CD4-positive, alpha-beta memory T cell (primary cell): ENCODE measurements at regions of chr13 and their contacts with region 1.

Region 1: DNA sequence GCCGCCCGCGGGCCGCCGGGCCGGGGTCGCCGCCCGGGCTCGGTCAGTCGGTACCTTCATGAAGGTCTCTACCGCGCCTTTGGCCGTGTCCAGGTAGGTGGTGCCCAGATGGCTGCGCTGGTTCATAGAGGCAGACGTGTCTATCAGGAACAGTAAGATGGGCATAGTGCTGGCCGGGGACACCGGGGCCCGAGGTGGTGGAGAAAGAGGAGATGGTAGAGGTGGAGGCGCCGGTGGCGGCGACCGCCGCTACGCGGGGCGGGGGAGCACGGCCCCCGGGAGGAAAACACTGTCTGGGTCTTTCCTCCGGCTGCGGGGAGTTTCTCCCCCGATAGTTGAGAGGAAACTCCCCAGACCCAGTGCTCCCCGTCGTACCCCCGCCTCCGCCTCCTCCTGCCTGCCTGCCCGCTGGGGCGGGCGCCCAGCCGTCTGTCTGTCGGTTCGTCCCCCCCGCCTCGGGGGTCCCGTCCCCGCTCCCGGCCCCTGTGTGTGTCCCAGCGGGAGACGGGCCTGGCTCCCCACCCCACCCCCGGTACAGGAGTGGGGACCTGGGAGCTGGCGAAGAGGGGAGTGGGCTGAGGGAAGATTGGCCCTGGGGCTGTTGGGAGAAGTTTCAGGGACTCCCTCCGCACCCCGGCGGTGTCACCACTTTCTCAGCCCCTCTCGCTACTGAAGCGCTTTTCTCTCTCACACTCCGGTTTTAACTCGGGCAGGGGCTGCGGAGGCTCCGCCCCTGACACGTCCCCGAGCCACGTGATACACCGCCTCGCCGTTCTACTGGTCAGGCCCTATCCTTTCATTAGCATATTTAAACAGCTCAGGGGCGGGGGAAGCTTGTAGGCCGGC is at the start of gene INTS6:
- DNase-seq: peak; percentile 98 to 100 (median 100)
- H3K4me3 ChIP-seq: peak within 1 kb of the TSS; percentile 62 to 82
- H3K4me3 Mint-ChIP-seq: peak within 1 kb of the TSS; percentile 89 to 96 (median 94)
- H3K27ac ChIP-seq: peak within 1 kb of the TSS; percentile 97
- H3K27ac Mint-ChIP-seq: peak within 1 kb of the TSS; percentile 94 to 99 (median 98)
- H3K4me1 ChIP-seq: peaks cover 42% of the 10 kb centered on the region
- H3K4me1 Mint-ChIP-seq: peaks cover 34 to 65% (median 40%) of the 10 kb centered on the region in 4 donors
- H3K27me3 ChIP-seq: no peaks in the 10 kb centered on the region
- H3K27me3 Mint-ChIP-seq: peaks cover 0 to 1% of the 10 kb centered on the region in 2 donors
- total RNA-seq, gene INTS6: 55.7 to 65.6 TPM

Region 2: GRCh38 chr13:50081679-50082425 is 1370.7 kb before region 1 on chr13:
- CTCF ChIA-PET with region 1: no interaction called
- POLR2A ChIA-PET with region 1: no interaction called
- intact Hi-C with region 1: loop called (anchors 2 kb)
- DNase-seq: peak; percentile 98 to 99 (median 99)
- H3K4me3 ChIP-seq: peak overlapping the region; percentile 85 to 87
- H3K4me3 Mint-ChIP-seq: peak overlapping the region; percentile 96 to 100 (median 99)
- H3K27ac ChIP-seq: peak overlapping the region; percentile 89
- H3K27ac Mint-ChIP-seq: peak overlapping the region; percentile 93 to 100 (median 98)
- H3K4me1 ChIP-seq: peaks cover 54% of the 10 kb centered on the region
- H3K4me1 Mint-ChIP-seq: peaks cover 23 to 62% (median 37%) of the 10 kb centered on the region in 4 donors
- H3K27me3 ChIP-seq: no peaks in the 10 kb centered on the region
- H3K27me3 Mint-ChIP-seq: peaks cover 0 to 6% of the 10 kb centered on the region in 2 donors

Region 3: DNA sequence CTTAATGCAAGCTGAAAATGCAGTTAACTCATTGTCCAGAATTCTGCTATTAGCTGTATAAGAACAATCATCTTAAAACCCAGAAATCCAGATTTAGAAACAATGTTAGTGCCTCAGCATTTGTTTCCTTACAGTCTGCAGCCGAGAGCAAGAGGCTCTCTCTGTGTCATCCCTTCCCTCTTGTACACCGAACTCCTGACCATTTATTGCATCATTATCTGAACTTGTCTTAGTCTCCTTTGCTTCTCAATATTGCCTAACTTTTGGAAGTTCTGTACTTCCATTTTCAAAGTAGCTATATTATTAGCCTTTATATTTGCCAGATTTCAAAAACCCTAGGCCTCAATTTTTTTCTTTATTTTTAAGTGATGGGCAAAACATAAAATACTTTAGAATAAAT is 515.9 kb before region 1 on chr13:
- CTCF ChIA-PET with region 1: no interaction called
- POLR2A ChIA-PET with region 1: no interaction called
- intact Hi-C with region 1: no loop called
- DNase-seq: no peak
- H3K4me3 ChIP-seq: no peak overlapping the region
- H3K4me3 Mint-ChIP-seq: no peak overlapping the region
- H3K27ac ChIP-seq: no peak overlapping the region
- H3K27ac Mint-ChIP-seq: no peak overlapping the region
- H3K4me1 ChIP-seq: no peaks in the 10 kb centered on the region
- H3K4me1 Mint-ChIP-seq: peaks cover 0 to 11% (median 1%) of the 10 kb centered on the region in 4 donors
- H3K27me3 ChIP-seq: no peaks in the 10 kb centered on the region
- H3K27me3 Mint-ChIP-seq: no peaks in the 10 kb centered on the region

Region 4: DNA sequence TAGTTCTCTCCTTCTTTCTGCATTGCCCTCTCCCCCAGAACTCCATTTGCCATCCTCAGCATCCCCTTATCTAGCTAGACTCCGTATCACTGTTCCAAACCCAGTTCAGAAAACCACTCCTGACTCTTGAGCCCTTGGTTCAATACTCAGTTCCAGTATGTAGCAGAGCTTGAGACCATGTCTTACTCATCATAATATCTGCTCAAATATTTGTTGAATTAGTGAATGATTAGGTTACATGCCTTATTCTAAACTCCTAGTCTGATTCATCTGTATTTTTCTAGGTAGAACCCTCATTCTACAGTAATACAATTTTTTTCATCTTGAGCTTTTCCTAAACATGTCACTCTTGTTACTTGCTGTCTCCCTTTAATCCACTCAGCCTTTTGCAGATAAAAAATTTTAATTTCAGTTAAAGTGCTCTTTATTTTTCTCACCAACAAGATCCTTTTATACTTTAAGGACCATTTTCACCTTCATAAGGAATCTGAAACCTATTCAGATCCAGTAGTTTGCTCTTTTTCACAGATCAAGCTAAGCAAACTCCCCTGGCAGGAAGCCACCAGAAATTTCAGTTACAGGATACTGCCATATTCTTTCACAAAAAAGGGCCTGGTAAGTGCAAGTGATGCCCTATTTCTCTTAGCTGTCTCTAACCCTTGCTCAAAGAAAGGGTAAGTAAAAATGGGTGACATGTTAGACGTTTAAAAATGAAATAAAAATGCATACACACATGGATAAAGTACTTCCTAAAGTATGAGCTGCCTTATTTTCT is 23.3 kb after region 1 on chr13:
- CTCF ChIA-PET with region 1: no interaction called
- POLR2A ChIA-PET with region 1: interaction called, 33 read pairs
- intact Hi-C with region 1: no loop called
- DNase-seq: no peak
- H3K4me3 ChIP-seq: no peak overlapping the region
- H3K4me3 Mint-ChIP-seq: no peak overlapping the region
- H3K27ac ChIP-seq: no peak overlapping the region
- H3K27ac Mint-ChIP-seq: peak overlapping the region in 1 of 7 donors; percentile 61
- H3K4me1 ChIP-seq: no peaks in the 10 kb centered on the region
- H3K4me1 Mint-ChIP-seq: no peaks in the 10 kb centered on the region
- H3K27me3 ChIP-seq: no peaks in the 10 kb centered on the region
- H3K27me3 Mint-ChIP-seq: no peaks in the 10 kb centered on the region

Region 5: DNA sequence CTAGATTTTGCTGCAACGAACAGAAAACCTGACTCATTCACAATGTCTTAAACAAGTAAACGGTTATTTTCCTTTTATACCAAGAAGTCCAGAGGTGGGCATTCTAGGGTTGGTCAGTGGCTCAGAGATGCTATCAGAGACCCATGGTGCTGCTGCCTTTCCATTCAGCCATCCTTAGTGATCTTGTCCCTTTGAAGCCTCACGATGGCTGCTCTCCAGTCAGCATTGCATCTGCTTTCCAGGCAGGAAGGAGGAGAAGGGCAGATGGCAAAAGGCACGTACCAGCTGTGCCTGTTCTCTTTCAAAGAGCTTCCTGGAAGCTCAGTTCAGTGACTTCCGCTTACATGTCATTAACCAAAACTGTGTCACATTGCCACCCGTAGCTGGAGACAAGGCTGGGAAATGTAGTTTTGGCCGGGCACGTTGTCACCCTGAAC is 161.8 kb after region 1 on chr13:
- CTCF ChIA-PET with region 1: interaction called, 4 read pairs
- POLR2A ChIA-PET with region 1: interaction called, 64 read pairs
- intact Hi-C with region 1: no loop called
- DNase-seq: peak; percentile 49 to 60 (median 56)
- H3K4me3 ChIP-seq: peak overlapping the region; percentile 39 to 42
- H3K4me3 Mint-ChIP-seq: peak overlapping the region; percentile 43 to 93 (median 90)
- H3K27ac ChIP-seq: peak overlapping the region; percentile 51
- H3K27ac Mint-ChIP-seq: peak overlapping the region; percentile 68 to 99 (median 95)
- H3K4me1 ChIP-seq: peaks cover 11% of the 10 kb centered on the region
- H3K4me1 Mint-ChIP-seq: peaks cover 10 to 34% (median 17%) of the 10 kb centered on the region in 4 donors
- H3K27me3 ChIP-seq: no peaks in the 10 kb centered on the region
- H3K27me3 Mint-ChIP-seq: no peaks in the 10 kb centered on the region

Region 6: DNA sequence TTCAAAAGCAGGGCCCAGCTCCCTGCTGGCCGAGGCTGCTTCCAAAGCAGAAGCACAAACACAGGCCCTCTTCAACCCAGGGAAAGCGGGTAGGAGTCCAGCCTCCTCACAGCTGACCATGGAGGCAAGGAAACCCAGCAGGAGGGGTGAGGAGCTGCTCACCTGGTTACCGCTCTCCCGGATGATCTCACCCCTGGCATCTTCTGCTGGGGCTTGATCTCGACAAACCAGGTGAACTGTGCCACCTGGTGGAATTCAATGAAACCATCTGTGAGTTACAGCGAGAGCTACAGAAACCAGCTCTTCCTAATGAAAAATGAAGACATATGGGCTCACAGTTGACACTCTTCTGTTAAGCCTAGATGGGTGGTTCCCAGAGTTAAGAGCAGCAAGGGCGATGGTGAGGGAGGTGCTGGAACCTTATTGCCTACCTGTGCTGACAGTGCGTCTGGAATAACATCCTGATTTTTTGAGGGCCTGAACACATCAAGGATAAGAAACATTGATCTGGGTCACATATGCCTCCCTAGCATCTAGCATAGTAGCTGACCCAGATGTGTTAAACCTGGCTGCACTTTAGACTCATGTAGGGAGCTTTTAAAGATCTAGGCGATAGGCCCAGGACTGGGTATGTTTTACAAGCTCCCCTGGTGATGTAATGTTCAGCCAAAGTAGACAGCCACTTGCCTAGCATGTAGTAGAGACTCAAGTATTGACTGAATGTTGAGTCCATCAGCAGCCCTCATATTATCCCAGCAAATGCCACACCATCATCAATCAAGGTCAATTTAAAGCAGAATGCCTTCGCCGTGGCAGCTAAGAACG is 345.3 kb after region 1 on chr13:
- CTCF ChIA-PET with region 1: interaction called, 22 read pairs
- POLR2A ChIA-PET with region 1: interaction called, 220 read pairs
- intact Hi-C with region 1: loop called (anchors 1 kb)
- DNase-seq: peak; percentile 66 to 81 (median 71)
- H3K4me3 ChIP-seq: no peak overlapping the region
- H3K4me3 Mint-ChIP-seq: no peak overlapping the region
- H3K27ac ChIP-seq: peak overlapping the region; percentile 11
- H3K27ac Mint-ChIP-seq: peak overlapping the region; percentile 27 to 92 (median 77)
- H3K4me1 ChIP-seq: peaks cover 17% of the 10 kb centered on the region
- H3K4me1 Mint-ChIP-seq: peaks cover 20 to 39% (median 23%) of the 10 kb centered on the region in 4 donors
- H3K27me3 ChIP-seq: no peaks in the 10 kb centered on the region
- H3K27me3 Mint-ChIP-seq: no peaks in the 10 kb centered on the region

Region 7: DNA sequence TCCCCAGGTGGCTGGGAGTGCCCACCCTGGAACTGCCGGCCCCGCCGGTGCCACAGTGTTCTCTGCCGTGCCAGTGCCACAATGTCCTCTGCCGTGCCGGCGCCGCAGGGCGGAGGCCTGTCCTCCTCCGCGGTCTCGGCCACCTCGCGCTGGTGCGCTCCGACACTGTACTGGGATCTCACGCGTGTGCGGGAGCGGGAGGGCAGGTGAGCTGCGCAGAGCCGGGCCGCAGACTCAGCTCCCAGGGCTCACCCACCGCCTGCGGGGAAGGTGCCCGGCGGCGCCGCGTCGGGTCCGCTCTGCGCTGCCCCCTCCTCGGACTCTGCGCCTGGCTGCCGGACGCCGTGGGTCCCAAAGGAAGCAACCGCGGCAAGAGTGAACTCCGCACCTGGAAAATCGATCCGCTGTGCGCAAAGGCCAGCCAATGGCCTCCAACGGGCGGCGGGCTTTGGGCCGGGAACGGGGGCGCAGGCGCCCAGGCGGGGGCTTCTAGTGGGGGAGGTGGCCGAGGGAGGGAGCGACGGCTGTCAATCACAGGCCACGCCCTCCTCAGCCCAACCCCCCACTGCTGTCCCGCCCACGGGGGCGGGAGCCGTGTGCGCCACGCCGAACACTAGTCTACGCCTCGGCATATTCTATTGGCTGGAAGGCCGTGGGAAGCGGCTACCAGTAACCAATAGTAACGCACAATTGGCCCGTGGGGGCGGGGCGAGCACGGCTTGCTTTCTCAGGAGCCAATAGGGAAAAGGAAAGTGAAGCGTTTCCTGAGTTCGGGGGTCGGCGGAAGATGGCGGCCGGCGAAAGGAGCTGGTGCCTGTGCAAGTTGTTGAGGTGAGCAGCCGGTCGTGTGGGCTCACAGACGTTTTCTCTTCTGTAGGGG is 559.3 kb after region 1 on chr13 and contains the start of gene ALG11:
- CTCF ChIA-PET with region 1: no interaction called
- POLR2A ChIA-PET with region 1: interaction called, 5 read pairs
- intact Hi-C with region 1: loop called (anchors 1 kb)
- DNase-seq: peak; percentile 99
- H3K4me3 ChIP-seq: peak within 1 kb of the TSS; percentile 71 to 92
- H3K4me3 Mint-ChIP-seq: peak within 1 kb of the TSS; percentile 96 to 100 (median 100)
- H3K27ac ChIP-seq: peak within 1 kb of the TSS; percentile 52
- H3K27ac Mint-ChIP-seq: peak within 1 kb of the TSS; percentile 87 to 98 (median 97)
- H3K4me1 ChIP-seq: peaks cover 22% of the 10 kb centered on the region
- H3K4me1 Mint-ChIP-seq: peaks cover 14 to 44% (median 23%) of the 10 kb centered on the region in 4 donors
- H3K27me3 ChIP-seq: peaks cover 8% of the 10 kb centered on the region
- H3K27me3 Mint-ChIP-seq: peaks cover 4 to 24% of the 10 kb centered on the region in 2 donors
- total RNA-seq, gene ALG11: 37.2 to 42.2 TPM